Calu3 (cell line): ENCODE measurements at regions of chr12 and their contacts with region 1.

Region 1: GRCh38 chr12:85575120-85576096 is 260.8 kb downstream of the RASSF9 start:
- DNase-seq: peak; percentile 64
- H3K4me3 Mint-ChIP-seq: no peak overlapping the region
- H3K27ac Mint-ChIP-seq: no peak overlapping the region
- H3K4me1 Mint-ChIP-seq: peaks cover 8% of the 10 kb centered on the region
- H3K27me3 Mint-ChIP-seq: no peaks in the 10 kb centered on the region
- CTCF ChIP-seq: peak; percentile 71

Region 2: DNA sequence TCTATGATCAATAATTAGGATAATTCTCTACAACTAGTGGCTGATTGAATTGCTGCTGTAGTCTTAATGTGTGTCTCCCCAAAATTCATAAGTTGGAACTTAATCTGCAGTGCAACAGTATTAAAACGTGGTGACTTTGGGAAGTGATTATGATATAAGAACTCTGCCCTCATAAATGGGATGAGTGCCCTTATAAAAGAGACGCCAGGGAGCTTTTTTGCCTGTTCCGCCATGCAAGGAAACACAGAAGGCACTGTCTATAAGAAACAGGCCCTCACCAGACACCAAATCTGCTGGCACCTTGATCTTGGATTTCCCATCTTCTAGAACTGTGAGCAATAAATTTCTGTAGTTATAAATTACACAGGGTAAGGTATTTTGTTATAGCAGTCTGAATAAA is 134.4 kb before region 1 on chr12:
- CTCF ChIA-PET with region 1: no interaction called
- intact Hi-C with region 1: no loop called
- DNase-seq: no peak
- H3K4me3 Mint-ChIP-seq: no peak overlapping the region
- H3K27ac Mint-ChIP-seq: no peak overlapping the region
- H3K4me1 Mint-ChIP-seq: peaks cover 22% of the 10 kb centered on the region
- H3K27me3 Mint-ChIP-seq: no peaks in the 10 kb centered on the region
- CTCF ChIP-seq: no peak

Region 3: DNA sequence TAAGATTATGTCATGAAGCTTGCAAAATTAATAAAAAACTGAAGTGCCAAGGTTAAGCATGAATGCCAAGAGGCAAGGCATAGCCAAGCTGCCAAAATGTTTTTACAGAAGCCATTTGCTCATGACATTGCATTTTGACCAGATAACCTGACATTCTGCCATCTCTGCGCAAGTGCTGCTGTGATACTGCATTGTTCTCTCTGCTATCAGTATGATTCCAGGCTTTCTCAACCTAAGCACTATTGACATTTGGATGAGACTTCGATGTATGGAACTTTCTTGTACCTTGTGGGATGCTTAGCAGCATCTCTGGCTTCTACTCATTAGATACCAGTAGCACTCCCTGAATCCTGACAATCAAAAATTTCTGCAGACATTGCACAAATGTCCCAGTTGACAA is 121.6 kb after region 1 on chr12:
- CTCF ChIA-PET with region 1: no interaction called
- intact Hi-C with region 1: loop called (anchors 5 kb)
- DNase-seq: no peak
- H3K4me3 Mint-ChIP-seq: no peak overlapping the region
- H3K27ac Mint-ChIP-seq: no peak overlapping the region
- H3K4me1 Mint-ChIP-seq: peaks cover 23% of the 10 kb centered on the region
- H3K27me3 Mint-ChIP-seq: no peaks in the 10 kb centered on the region
- CTCF ChIP-seq: no peak

Region 4: DNA sequence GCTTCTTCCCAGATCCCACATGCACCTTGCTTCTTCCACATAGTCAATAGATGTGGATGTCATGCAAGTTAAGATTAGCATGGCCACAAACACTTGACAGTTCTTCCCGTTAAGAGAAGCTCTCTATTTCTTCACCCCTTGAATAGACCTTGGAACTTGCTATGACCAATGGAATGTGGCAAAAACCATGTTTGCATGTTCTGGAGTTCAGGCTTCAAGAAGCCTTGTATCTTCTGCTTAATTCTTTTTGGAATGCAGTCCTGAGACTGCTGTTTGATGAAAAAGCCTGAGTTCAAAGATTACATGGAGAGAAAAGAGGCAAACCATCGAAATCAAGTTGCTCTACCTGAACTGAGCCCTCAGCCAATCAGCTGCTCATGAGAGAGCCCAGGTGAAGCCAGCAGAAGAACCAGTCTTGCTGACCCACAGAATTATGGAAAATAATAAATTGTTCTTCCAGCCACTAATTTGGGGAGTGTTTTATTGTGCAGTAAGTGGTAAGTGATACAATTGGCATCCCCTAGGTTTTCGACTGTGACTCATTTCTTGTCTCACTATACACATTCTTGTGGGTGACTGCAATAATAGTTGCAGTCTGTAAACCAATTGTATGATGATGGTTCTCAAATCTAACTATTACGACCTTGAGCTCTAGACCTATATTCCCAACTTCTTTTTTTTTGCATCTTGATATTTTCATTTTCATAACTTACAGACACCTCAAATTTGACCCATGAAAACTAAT is 248.2 kb after region 1 on chr12:
- CTCF ChIA-PET with region 1: interaction called, 6 read pairs
- intact Hi-C with region 1: loop called (anchors 5 kb)
- DNase-seq: peak; percentile 24
- H3K4me3 Mint-ChIP-seq: peak overlapping the region; percentile 32
- H3K27ac Mint-ChIP-seq: peak overlapping the region; percentile 71
- H3K4me1 Mint-ChIP-seq: peaks cover 63% of the 10 kb centered on the region
- H3K27me3 Mint-ChIP-seq: no peaks in the 10 kb centered on the region
- CTCF ChIP-seq: no peak

Region 5: DNA sequence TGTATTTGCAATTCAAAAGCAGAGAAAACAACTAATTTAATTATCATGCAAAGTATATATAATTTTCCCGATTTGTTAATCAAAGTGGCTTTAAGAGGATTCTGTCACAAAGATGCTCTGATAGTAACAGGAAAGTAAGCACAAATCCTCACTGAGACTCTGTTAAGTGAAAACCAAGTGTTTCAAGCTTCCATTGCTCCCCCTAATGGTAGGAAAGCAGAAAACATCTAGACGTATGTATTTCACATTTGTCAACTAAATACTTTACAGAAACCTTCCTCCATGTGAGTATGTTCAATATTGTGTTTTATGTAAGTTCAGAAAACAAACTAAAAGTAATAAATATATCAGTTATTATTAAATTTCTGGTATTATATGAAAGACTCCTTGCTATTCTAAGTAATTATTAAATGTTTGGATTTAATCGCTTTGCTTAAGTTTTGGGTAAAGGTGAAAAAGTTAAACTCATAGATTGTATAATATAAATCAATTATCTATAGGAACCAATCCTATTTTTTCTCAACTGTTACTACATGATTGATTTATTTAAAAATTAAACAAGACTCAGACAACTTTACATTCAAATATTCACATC is 297.2 kb after region 1 on chr12:
- CTCF ChIA-PET with region 1: interaction called, 55 read pairs
- intact Hi-C with region 1: loop called (anchors 1 kb)
- DNase-seq: peak; percentile 16
- H3K4me3 Mint-ChIP-seq: no peak overlapping the region
- H3K27ac Mint-ChIP-seq: no peak overlapping the region
- H3K4me1 Mint-ChIP-seq: peaks cover 13% of the 10 kb centered on the region
- H3K27me3 Mint-ChIP-seq: no peaks in the 10 kb centered on the region
- CTCF ChIP-seq: peak; percentile 52